ENCODE measurements at regions of chr1 and their contacts with region 1.

Region 1: DNA sequence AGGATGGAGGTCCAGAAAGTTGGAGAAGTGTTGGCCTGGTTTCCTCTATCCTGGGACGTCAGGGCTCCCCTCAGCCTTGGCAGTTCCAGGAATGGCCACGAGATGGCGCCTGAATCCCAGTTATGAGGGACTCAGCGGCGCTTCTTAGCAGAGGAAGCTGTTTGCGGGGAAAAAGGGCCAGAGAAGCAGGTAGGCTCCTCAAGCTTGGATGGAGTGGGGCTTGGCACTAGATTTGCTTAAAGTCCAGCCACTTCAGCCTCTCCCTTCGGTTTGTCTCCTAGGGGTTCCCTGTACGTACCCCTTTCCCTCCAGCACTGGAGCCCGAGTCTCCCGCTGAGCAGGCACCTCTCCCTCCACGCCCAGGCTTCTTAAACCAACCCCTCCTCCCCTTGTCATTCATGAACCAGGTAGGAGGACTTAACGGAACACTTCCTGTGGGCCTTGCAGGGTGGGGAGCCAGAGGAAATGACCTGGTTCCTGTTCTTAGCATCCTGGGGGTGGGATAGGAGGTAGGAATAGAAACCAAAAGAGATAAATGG is 32.0 kb upstream of the TENT5B start:
- DNase-seq: peak; percentile 77 to 95 (median 90)
- ATAC-seq: peak; percentile 93
- H3K4me3 ChIP-seq: peak overlapping the region; percentile 36
- H3K4me3 Mint-ChIP-seq: peak overlapping the region; percentile 39
- H3K27ac ChIP-seq: no peak overlapping the region
- H3K27ac Mint-ChIP-seq: no peak overlapping the region
- H3K4me1 ChIP-seq: peaks cover 20% of the 10 kb centered on the region
- H3K4me1 Mint-ChIP-seq: peaks cover 21% of the 10 kb centered on the region
- H3K27me3 ChIP-seq: no peaks in the 10 kb centered on the region
- H3K27me3 Mint-ChIP-seq: no peaks in the 10 kb centered on the region
- CTCF ChIP-seq: peak; percentile 91

Region 2: GRCh38 chr1:26993237-26994019 is 51.3 kb before region 1 on chr1 and contains the start of gene TRNP1:
- CTCF ChIA-PET with region 1: interaction called, 11 read pairs
- POLR2A ChIA-PET with region 1: no interaction called
- intact Hi-C with region 1: no loop called
- DNase-seq: peak; percentile 39 to 87 (median 59)
- ATAC-seq: peak; percentile 60
- H3K4me3 ChIP-seq: peak within 1 kb of the TSS; percentile 36
- H3K4me3 Mint-ChIP-seq: peak within 1 kb of the TSS; percentile 89
- H3K27ac ChIP-seq: no peak within 1 kb of the TSS
- H3K27ac Mint-ChIP-seq: no peak within 1 kb of the TSS
- H3K4me1 ChIP-seq: peaks cover 23% of the 10 kb centered on the region
- H3K4me1 Mint-ChIP-seq: peaks cover 17% of the 10 kb centered on the region
- H3K27me3 ChIP-seq: peaks cover 42 to 48% of the 10 kb centered on the region in 2 experiments
- H3K27me3 Mint-ChIP-seq: peaks cover 68% of the 10 kb centered on the region
- CTCF ChIP-seq: no peak
- total RNA-seq, gene TRNP1: 0.19 to 0.20 TPM

Region 3: DNA sequence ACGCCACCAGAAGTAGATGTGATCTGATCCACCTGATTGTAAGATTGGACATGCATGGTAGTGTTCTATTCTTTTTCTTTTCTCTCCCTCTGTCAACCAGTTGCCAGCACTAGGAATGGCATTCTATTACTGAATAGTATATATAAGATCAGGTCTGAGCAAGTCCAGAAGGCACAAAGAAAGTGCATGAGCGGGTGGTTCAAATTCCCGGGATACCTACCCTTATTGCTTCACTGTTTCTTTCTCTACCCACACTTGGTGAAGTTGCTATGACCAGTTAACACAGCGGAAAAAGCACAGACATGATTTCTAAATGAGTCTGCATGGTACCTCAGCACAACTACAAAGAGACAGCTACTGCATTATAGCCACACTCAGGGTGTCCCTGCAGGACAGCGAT is 46.2 kb after region 1 on chr1:
- CTCF ChIA-PET with region 1: interaction called, 24 read pairs
- POLR2A ChIA-PET with region 1: no interaction called
- intact Hi-C with region 1: no loop called
- DNase-seq: no peak
- ATAC-seq: no peak
- H3K4me3 ChIP-seq: no peak overlapping the region
- H3K4me3 Mint-ChIP-seq: no peak overlapping the region
- H3K27ac ChIP-seq: no peak overlapping the region
- H3K27ac Mint-ChIP-seq: no peak overlapping the region
- H3K4me1 ChIP-seq: no peaks in the 10 kb centered on the region
- H3K4me1 Mint-ChIP-seq: no peaks in the 10 kb centered on the region
- H3K27me3 ChIP-seq: no peaks in the 10 kb centered on the region
- H3K27me3 Mint-ChIP-seq: no peaks in the 10 kb centered on the region
- CTCF ChIP-seq: no peak

Region 4: DNA sequence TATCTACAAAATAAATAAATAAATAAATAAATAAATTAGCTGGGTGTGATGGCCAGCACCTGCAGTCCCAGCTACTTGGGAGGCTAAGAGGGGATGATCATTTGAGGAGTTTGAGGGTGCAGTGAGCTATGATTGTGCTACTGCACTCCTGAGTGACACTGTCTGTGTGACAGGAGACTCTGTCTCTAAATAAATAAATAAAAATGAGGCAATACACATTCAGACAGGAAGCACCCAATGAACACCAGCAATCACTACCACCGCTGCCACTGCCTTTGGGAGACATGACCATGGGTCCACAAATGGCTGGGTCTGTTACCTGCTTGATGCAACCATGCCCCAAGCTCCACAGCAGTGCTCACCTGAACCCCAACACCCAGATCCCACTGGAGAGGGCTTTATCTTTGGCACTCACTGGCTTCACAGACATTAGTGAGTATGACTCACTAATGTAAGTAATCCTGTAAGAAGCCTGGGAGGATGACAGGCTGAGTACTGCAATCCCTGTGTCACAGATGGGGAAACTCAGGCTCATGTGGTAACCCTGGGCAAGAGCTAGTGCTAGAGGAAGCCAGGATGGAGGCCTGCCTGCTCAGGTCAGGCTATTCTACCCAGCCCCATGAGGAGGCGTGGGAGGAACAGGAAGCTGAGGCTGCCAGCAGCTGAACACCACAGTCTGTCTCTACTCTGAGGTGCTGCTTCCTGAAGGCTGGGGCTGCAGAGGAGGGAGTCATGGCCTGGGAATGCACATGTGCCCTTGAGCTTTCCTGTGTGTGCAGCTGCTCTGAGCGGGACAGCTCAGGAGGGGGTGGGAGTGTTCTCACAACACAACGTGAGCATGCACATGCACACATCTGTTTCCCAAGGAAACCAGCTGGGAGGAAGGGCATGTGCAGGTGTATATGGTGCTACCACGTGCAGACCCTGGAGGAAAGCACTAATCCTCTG is 67.2 kb after region 1 on chr1:
- CTCF ChIA-PET with region 1: interaction called, 12 read pairs
- POLR2A ChIA-PET with region 1: no interaction called
- intact Hi-C with region 1: no loop called
- DNase-seq: peak; percentile 46 to 87 (median 66)
- ATAC-seq: peak; percentile 99
- H3K4me3 ChIP-seq: no peak overlapping the region
- H3K4me3 Mint-ChIP-seq: peak overlapping the region; percentile 79
- H3K27ac ChIP-seq: peak overlapping the region; percentile 49 to 83
- H3K27ac Mint-ChIP-seq: peak overlapping the region; percentile 90
- H3K4me1 ChIP-seq: peaks cover 68% of the 10 kb centered on the region
- H3K4me1 Mint-ChIP-seq: peaks cover 64% of the 10 kb centered on the region
- H3K27me3 ChIP-seq: no peaks in the 10 kb centered on the region
- H3K27me3 Mint-ChIP-seq: no peaks in the 10 kb centered on the region
- CTCF ChIP-seq: peak; percentile 64

Region 5: GRCh38 chr1:27284425-27285273 is 240.0 kb after region 1 on chr1:
- CTCF ChIA-PET with region 1: interaction called, 4 read pairs
- POLR2A ChIA-PET with region 1: interaction called, 3 read pairs
- intact Hi-C with region 1: loop called (anchors 1 to 2 kb)
- DNase-seq: peak; percentile 74 to 95 (median 88)
- ATAC-seq: peak; percentile 98
- H3K4me3 ChIP-seq: no peak overlapping the region
- H3K4me3 Mint-ChIP-seq: no peak overlapping the region
- H3K27ac ChIP-seq: no peak overlapping the region
- H3K27ac Mint-ChIP-seq: peak overlapping the region; percentile 42
- H3K4me1 ChIP-seq: no peaks in the 10 kb centered on the region
- H3K4me1 Mint-ChIP-seq: peaks cover 13% of the 10 kb centered on the region
- H3K27me3 ChIP-seq: no peaks in the 10 kb centered on the region
- H3K27me3 Mint-ChIP-seq: no peaks in the 10 kb centered on the region
- CTCF ChIP-seq: peak; percentile 84